Activated naive CD8-positive, alpha-beta T cell treated with anti-CD3 and anti-CD28 coated beads, Interleukin-2, amount 10 ng/mL, durations not matched to agents 7 days and 5 days (primary cell): ENCODE measurements at regions of chr1 and their contacts with region 1.

Region 1: DNA sequence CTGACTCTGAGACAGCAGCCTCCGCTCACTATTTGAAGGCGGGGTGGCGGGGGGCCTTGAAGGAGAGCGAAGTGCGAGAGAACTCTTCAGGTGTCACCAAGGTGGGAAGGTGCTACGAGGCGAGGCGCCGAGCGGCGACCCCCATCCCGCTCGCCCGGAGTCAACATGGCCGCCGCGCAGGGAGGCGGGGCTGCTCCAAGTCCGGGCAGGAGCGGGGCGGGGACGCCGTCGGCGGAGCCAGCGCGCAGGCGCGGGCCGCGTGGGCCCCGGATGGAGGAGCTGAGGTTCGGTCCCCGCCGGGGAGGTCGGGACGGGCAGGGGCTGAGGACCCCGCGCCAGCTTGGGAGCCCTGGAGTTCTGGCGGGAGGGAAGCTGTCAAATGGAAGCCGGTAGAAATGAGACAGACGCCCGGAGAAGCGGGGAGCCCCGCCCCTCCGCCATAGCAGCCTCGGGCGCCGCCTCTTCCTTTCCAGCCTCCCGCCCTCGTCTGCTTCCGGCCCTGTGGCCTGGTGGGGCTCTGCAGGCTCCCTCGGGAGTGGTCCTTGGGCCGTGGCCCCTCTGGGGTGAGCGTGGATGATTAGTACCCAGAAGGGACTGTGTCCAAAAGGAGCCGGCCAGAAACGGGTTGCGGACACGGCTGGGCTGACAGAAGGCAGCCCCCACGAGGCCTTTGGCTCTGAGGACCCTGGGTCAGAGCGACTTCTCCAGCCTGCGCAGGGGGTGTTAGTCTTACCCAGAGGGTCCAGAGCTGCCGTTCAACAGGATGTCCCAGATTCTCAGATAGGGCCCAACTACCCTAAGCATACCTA is at the start of gene PIGV:
- DNase-seq: peak; percentile 96
- ATAC-seq: peak; percentile 59
- H3K4me3 Mint-ChIP-seq: peak within 1 kb of the TSS; percentile 99
- H3K27ac Mint-ChIP-seq: peak within 1 kb of the TSS; percentile 100
- H3K4me1 Mint-ChIP-seq: peaks cover 68% of the 10 kb centered on the region
- H3K27me3 Mint-ChIP-seq: no peaks in the 10 kb centered on the region
- total RNA-seq, gene PIGV: 21.5 TPM

Region 2: DNA sequence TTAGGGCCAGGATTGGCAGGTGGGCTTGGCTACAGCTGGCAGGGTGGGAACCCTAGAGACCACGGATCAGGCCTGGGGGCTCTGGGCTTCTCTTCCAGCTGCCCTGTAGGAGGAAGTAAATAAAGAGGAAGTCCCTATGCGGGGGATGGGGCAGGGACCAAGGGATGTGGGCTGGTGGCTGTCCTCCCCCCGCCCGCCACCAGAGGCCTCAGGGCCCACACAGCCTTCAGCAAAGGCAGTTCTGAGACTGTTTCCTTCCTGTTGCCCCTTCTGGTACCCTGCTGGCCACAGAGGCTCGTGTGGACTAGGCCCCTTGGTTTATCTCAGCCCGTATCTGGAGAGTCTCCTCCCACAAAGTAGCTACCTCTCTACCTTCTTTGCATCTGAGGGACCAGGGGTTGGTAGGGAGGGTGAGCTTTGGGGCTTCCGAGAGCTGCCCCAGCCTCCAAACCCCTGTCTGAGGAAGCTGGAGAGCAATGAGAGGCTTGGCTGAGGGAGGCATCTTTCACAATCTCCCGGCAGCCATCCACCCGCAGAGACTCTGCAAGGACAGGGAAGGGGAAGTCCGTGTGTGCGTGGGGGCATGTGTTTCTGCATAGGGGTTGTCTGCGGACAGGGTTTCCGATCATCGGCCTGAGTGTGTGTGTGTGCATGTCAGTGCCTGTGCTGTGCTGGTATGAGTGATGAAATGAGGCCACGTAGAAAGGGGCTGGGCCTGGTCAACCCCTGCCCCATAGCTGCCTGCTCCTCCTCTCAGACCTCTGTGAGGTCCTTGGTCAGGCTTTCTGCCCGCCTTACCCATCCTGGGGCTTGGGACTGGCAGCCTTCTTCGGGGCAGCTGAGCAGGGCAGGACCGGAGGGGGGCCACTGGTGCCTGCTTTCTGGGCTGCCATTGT is 245.8 kb before region 1 on chr1:
- POLR2A ChIA-PET with region 1: interaction called, 19 read pairs
- DNase-seq: peak; percentile 84
- ATAC-seq: peak; percentile 78
- H3K4me3 Mint-ChIP-seq: peak overlapping the region; percentile 77
- H3K27ac Mint-ChIP-seq: peak overlapping the region; percentile 93
- H3K4me1 Mint-ChIP-seq: peaks cover 71% of the 10 kb centered on the region
- H3K27me3 Mint-ChIP-seq: no peaks in the 10 kb centered on the region

Region 3: DNA sequence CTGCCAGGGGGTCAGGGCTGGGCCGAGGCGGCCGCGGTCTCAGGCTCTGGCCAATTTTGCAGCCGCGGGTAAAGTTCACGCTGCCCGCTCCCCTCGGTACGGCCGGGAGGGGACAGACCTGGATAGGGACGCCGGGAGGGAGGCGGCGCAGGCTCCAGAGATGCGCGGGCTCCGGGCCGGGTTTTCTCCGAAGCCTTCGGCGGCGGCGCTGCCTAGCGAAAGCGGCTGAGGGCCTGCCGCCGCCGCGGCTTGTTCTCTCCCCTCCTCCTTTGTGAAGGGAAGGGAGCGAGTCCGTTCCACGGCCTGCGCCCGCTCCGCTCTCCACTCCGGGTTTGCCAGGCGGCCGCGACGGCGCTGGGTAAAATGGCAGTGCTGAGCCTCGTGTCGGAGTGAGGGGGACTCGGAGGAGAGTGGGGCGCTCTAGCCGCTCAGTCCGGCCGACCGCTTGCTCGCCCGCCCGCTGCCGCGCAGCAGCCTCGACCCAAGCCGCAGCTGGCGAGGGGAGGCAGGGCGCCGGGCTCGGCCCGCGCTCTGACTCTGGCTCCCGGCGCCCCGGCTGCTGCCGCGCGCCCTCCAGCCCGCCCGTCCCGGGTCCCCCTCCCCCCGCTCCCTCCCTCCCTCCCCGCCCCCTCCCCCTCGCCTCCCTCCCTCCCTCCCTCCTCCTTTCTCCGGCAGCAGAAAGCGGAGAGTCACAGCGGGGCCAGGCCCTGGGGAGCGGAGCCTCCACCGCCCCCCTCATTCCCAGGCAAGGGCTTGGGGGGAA is 92.4 kb before region 1 on chr1 and contains the start of gene ARID1A:
- POLR2A ChIA-PET with region 1: interaction called, 357 read pairs
- DNase-seq: peak; percentile 98
- ATAC-seq: peak; percentile 64
- H3K4me3 Mint-ChIP-seq: peak within 1 kb of the TSS; percentile 90
- H3K27ac Mint-ChIP-seq: peak within 1 kb of the TSS; percentile 97
- H3K4me1 Mint-ChIP-seq: peaks cover 20% of the 10 kb centered on the region
- H3K27me3 Mint-ChIP-seq: no peaks in the 10 kb centered on the region
- total RNA-seq, gene ARID1A: 118 to 124 TPM

Region 4: GRCh38 chr1:26744075-26744959 is 43.6 kb before region 1 on chr1:
- POLR2A ChIA-PET with region 1: interaction called, 27 read pairs
- DNase-seq: peak; percentile 65
- ATAC-seq: peak; percentile 99
- H3K4me3 Mint-ChIP-seq: peak overlapping the region; percentile 85
- H3K27ac Mint-ChIP-seq: peak overlapping the region; percentile 97
- H3K4me1 Mint-ChIP-seq: peaks cover 61% of the 10 kb centered on the region
- H3K27me3 Mint-ChIP-seq: no peaks in the 10 kb centered on the region

Region 5: GRCh38 chr1:26833432-26834405 is 45.8 kb after region 1 on chr1:
- POLR2A ChIA-PET with region 1: interaction called, 27 read pairs
- DNase-seq: peak; percentile 83
- ATAC-seq: peak; percentile 95
- H3K4me3 Mint-ChIP-seq: peak overlapping the region; percentile 80
- H3K27ac Mint-ChIP-seq: peak overlapping the region; percentile 98
- H3K4me1 Mint-ChIP-seq: peaks cover 53% of the 10 kb centered on the region
- H3K27me3 Mint-ChIP-seq: no peaks in the 10 kb centered on the region